Caco-2 (cell line): ENCODE measurements at regions of chr7 and their contacts with region 1.

Region 1: DNA sequence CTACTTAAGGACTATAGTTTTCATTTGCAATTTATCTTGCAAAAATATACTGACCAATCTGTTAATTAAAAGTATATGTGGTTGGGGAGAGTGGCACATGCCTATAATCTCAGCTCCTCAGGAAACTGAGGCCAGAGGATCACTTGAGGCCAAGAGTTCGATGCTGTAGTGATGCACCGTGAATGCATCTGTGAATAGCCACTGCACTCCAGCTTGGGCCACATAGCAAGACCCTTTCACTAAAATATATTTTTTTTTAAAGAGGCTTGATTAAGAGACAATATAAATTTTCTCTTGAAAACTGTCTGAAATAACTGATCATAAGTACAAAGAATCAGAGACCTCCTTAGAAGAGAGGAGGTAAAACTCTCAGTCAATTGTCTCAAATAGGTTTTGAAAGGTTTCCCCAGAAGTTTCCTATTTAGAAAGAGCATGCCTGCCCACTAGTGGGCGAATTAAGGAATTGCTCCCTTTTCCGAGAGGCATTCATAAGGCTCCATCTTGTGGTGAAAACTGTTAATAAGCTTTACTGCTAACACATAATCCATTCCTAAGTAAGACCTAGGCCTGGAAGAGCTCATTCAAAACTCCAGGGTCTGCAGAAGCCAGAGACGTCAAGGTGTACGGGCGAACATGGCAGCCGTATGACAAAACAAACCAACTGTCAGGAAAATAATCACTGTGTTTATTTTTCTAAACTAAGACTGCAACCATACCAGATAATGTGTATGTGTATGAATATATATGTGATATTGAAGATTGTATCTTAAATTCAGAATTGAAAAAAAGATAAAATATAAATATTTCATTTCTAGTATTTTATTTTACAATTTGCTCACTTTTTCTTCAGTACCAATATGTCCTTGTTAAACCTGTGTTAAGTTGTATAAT is 6.8 kb upstream of the TAS2R40 start:
- DNase-seq: peak; percentile 58 to 79
- H3K4me3 ChIP-seq: no peak overlapping the region
- H3K4me3 Mint-ChIP-seq: no peak overlapping the region
- H3K27ac Mint-ChIP-seq: no peak overlapping the region
- H3K4me1 ChIP-seq: no peaks in the 10 kb centered on the region
- H3K4me1 Mint-ChIP-seq: no peaks in the 10 kb centered on the region
- H3K27me3 ChIP-seq: no peaks in the 10 kb centered on the region
- H3K27me3 Mint-ChIP-seq: peaks cover 7% of the 10 kb centered on the region
- CTCF ChIP-seq: peak; percentile 98 to 100

Region 2: GRCh38 chr7:142853739-142854371 is 361.2 kb before region 1 on chr7:
- CTCF ChIA-PET with region 1: interaction called, 7 read pairs
- POLR2A ChIA-PET with region 1: no interaction called
- intact Hi-C with region 1: loop called (anchors 1 kb)
- DNase-seq: peak; percentile 64 to 75
- H3K4me3 ChIP-seq: peak overlapping the region; percentile 76
- H3K4me3 Mint-ChIP-seq: peak overlapping the region; percentile 91
- H3K27ac Mint-ChIP-seq: peak overlapping the region; percentile 47
- H3K4me1 ChIP-seq: peaks cover 6% of the 10 kb centered on the region; the same call in 1 of the 2 replicates
- H3K4me1 Mint-ChIP-seq: peaks cover 7% of the 10 kb centered on the region
- H3K27me3 ChIP-seq: no peaks in the 10 kb centered on the region; the same call in none of the 2 replicates
- H3K27me3 Mint-ChIP-seq: peaks cover 14% of the 10 kb centered on the region
- CTCF ChIP-seq: peak; percentile 83 to 85

Region 3: DNA sequence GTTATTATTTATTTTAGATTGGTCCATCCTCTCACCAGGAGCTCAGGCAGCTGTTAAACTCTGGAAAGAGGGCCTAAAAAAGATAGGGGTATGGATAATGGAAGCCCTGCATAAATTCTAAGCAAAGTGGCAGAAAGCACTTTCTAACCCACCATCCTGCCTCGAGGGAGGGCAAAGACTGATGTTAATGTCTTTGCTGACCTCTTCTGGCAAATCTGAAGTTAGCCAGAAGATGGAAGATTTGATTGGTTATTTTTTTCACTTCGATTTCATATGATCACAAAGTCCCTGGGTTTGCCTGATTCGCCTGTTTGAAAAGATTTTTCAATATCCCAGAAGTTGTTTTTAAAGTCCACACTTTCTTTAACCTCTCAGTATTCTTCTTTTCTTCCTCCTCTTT is 212.9 kb before region 1 on chr7:
- CTCF ChIA-PET with region 1: interaction called, 167 read pairs
- POLR2A ChIA-PET with region 1: no interaction called
- intact Hi-C with region 1: loop called (anchors 1 kb)
- DNase-seq: peak in 1 of 2 experiments; percentile 38
- H3K4me3 ChIP-seq: no peak overlapping the region
- H3K4me3 Mint-ChIP-seq: no peak overlapping the region
- H3K27ac Mint-ChIP-seq: no peak overlapping the region
- H3K4me1 ChIP-seq: peaks cover 17% of the 10 kb centered on the region
- H3K4me1 Mint-ChIP-seq: peaks cover 14% of the 10 kb centered on the region
- H3K27me3 ChIP-seq: no peaks in the 10 kb centered on the region
- H3K27me3 Mint-ChIP-seq: no peaks in the 10 kb centered on the region
- CTCF ChIP-seq: peak; percentile 40 to 58

Region 4: GRCh38 chr7:143015926-143016490 is 199.0 kb before region 1 on chr7:
- CTCF ChIA-PET with region 1: interaction called, 167 read pairs
- POLR2A ChIA-PET with region 1: no interaction called
- intact Hi-C with region 1: no loop called
- DNase-seq: no peak
- H3K4me3 ChIP-seq: no peak overlapping the region
- H3K4me3 Mint-ChIP-seq: no peak overlapping the region
- H3K27ac Mint-ChIP-seq: no peak overlapping the region
- H3K4me1 ChIP-seq: no peaks in the 10 kb centered on the region
- H3K4me1 Mint-ChIP-seq: no peaks in the 10 kb centered on the region
- H3K27me3 ChIP-seq: no peaks in the 10 kb centered on the region; the same call in 1 of the 2 replicates
- H3K27me3 Mint-ChIP-seq: peaks cover 20% of the 10 kb centered on the region
- CTCF ChIP-seq: no peak

Region 5: DNA sequence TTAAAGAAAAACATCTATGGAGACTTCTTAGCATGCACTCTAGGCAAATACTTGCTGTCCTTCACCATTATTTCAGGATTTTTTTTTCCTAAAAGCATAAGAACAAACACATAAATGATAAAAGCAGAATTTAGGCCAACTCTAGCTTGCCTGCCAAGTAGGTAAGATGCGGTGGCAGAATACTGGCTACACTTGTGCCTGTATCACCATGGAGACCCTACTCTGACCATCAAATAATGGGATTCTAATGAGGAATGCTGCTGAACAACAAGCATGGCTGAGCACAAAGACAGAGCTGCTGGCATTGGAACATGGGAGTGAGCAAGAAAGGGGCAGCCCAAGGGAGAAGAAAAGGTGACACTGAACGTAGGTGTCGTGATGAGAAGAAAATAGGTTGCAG is 11.6 kb before region 1 on chr7:
- CTCF ChIA-PET with region 1: interaction called, 12 read pairs
- POLR2A ChIA-PET with region 1: no interaction called
- intact Hi-C with region 1: no loop called
- DNase-seq: no peak
- H3K4me3 ChIP-seq: no peak overlapping the region
- H3K4me3 Mint-ChIP-seq: no peak overlapping the region
- H3K27ac Mint-ChIP-seq: no peak overlapping the region
- H3K4me1 ChIP-seq: no peaks in the 10 kb centered on the region
- H3K4me1 Mint-ChIP-seq: no peaks in the 10 kb centered on the region
- H3K27me3 ChIP-seq: no peaks in the 10 kb centered on the region
- H3K27me3 Mint-ChIP-seq: peaks cover 17% of the 10 kb centered on the region
- CTCF ChIP-seq: no peak